ENCODE measurements at regions of chr7 and their contacts with region 1.

Region 1: GRCh38 chr7:92461027-92462003 is 14.0 kb downstream of the GATAD1 start:
- DNase-seq: peak in 4 of 5 donors; percentile 22 to 33 (median 26)
- H3K4me3 ChIP-seq: no peak overlapping the region
- H3K4me3 Mint-ChIP-seq: no peak overlapping the region
- H3K27ac ChIP-seq: no peak overlapping the region
- H3K27ac Mint-ChIP-seq: peak overlapping the region in 1 of 7 donors; percentile 3
- H3K4me1 ChIP-seq: no peaks in the 10 kb centered on the region
- H3K4me1 Mint-ChIP-seq: peaks cover 0 to 2% (median 0%) of the 10 kb centered on the region in 4 donors
- H3K27me3 ChIP-seq: no peaks in the 10 kb centered on the region
- H3K27me3 Mint-ChIP-seq: no peaks in the 10 kb centered on the region

Region 2: DNA sequence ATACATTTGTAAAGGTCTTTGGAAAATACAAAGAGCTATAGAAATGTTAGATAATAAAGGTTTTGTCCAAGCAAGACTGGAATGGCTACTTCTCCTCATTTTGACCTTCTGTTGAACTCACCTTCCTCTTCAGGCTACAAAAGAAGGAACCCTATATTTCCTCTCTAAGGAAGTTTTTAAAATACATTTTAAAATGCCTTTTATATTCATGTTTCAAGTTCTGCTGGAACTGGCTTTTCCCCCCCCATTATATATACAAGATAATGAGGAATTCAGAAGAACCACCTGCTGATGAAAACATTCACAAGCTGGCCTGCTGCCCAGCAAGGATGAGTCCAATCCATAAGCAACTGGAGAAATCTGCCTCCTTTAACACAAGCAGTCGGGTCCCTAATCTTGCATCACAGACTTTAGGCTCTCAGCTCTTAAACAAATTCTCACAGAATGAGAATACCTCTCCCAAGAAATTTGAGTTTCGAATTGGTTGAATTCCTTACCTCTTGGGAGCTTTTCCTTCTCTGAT is 625.4 kb before region 1 on chr7:
- CTCF ChIA-PET with region 1: no interaction called
- POLR2A ChIA-PET with region 1: no interaction called
- intact Hi-C with region 1: loop called (anchors 5 kb)
- DNase-seq: no peak
- H3K4me3 ChIP-seq: no peak overlapping the region
- H3K4me3 Mint-ChIP-seq: no peak overlapping the region
- H3K27ac ChIP-seq: no peak overlapping the region
- H3K27ac Mint-ChIP-seq: no peak overlapping the region
- H3K4me1 ChIP-seq: no peaks in the 10 kb centered on the region
- H3K4me1 Mint-ChIP-seq: peaks cover 0 to 3% (median 0%) of the 10 kb centered on the region in 4 donors
- H3K27me3 ChIP-seq: no peaks in the 10 kb centered on the region
- H3K27me3 Mint-ChIP-seq: no peaks in the 10 kb centered on the region

Region 3: GRCh38 chr7:92421676-92422435 is 39.5 kb before region 1 on chr7:
- CTCF ChIA-PET with region 1: interaction called, 29 read pairs
- POLR2A ChIA-PET with region 1: no interaction called
- intact Hi-C with region 1: loop called (anchors 1 kb)
- DNase-seq: no peak
- H3K4me3 ChIP-seq: no peak overlapping the region
- H3K4me3 Mint-ChIP-seq: no peak overlapping the region
- H3K27ac ChIP-seq: no peak overlapping the region
- H3K27ac Mint-ChIP-seq: no peak overlapping the region
- H3K4me1 ChIP-seq: peaks cover 12% of the 10 kb centered on the region
- H3K4me1 Mint-ChIP-seq: peaks cover 9 to 11% (median 9%) of the 10 kb centered on the region in 4 donors
- H3K27me3 ChIP-seq: no peaks in the 10 kb centered on the region
- H3K27me3 Mint-ChIP-seq: peaks cover 13 to 14% of the 10 kb centered on the region in 2 donors

Measured in CD4-positive, alpha-beta memory T cell (primary cell).